MCF 10A (cell line): ENCODE measurements at regions of chr9 and their contacts with region 1.

Region 1: DNA sequence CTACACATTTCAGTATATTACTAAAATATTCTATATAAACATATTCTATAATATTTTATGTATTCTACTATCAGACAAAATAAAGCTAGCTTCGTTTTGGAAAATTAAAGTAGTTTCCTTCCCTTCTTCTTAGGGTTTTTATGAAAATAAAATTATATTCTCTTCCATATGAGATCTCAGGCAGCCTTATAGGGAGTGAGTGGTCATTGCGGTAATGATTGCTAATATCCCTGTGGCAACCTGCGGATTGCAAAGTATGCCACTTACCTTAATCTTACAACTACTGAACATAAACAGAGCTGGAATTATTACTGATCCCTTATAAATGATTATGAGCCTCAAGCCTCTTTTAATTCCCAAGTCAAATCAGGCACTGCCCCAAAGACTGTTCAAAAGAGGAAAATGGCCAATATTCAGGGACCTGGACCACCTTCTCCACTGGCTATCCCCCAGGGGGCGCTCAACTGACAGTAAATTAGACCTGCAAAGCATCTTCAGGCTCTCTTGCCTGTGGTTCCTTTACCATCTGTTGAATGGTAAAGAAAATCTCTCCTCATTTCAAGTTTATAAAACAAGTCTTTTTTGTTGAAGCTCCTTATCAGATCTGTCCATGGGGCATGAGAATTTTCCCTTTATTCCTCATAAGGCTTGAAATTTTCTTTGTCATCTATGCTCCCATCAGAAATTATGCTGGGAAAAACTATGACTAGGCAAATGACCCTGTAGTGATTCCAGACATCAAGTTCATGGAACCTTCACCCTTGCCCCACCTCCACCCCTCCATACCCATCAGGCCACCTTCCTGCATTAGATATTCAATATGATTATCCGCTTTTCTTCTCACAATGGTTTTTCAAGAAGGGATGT is 163.9 kb downstream of the CEMIP2 start:
- DNase-seq: peak; percentile 79
- H3K4me3 Mint-ChIP-seq: no peak overlapping the region
- H3K27ac Mint-ChIP-seq: no peak overlapping the region
- H3K4me1 Mint-ChIP-seq: no peaks in the 10 kb centered on the region
- H3K27me3 Mint-ChIP-seq: no peaks in the 10 kb centered on the region
- CTCF ChIP-seq: peak; percentile 69

Region 2: GRCh38 chr9:71490810-71491209 is 113.6 kb before region 1 on chr9:
- CTCF ChIA-PET with region 1: interaction called, 22 read pairs
- POLR2A ChIA-PET with region 1: no interaction called
- intact Hi-C with region 1: loop called (anchors 5 kb)
- DNase-seq: peak; percentile 33
- H3K4me3 Mint-ChIP-seq: no peak overlapping the region
- H3K27ac Mint-ChIP-seq: no peak overlapping the region
- H3K4me1 Mint-ChIP-seq: peaks cover 3% of the 10 kb centered on the region
- H3K27me3 Mint-ChIP-seq: no peaks in the 10 kb centered on the region
- CTCF ChIP-seq: peak; percentile 50

Region 3: GRCh38 chr9:71614409-71615010 is 10.1 kb after region 1 on chr9:
- CTCF ChIA-PET with region 1: interaction called, 18 read pairs
- POLR2A ChIA-PET with region 1: no interaction called
- intact Hi-C with region 1: no loop called
- DNase-seq: no peak
- H3K4me3 Mint-ChIP-seq: no peak overlapping the region
- H3K27ac Mint-ChIP-seq: no peak overlapping the region
- H3K4me1 Mint-ChIP-seq: no peaks in the 10 kb centered on the region
- H3K27me3 Mint-ChIP-seq: no peaks in the 10 kb centered on the region
- CTCF ChIP-seq: no peak

Region 4: GRCh38 chr9:71683598-71684235 is 79.3 kb after region 1 on chr9:
- CTCF ChIA-PET with region 1: interaction called, 39 read pairs
- POLR2A ChIA-PET with region 1: interaction called, 4 read pairs
- intact Hi-C with region 1: no loop called
- DNase-seq: peak; percentile 88
- H3K4me3 Mint-ChIP-seq: peak overlapping the region; percentile 15
- H3K27ac Mint-ChIP-seq: no peak overlapping the region
- H3K4me1 Mint-ChIP-seq: peaks cover 35% of the 10 kb centered on the region
- H3K27me3 Mint-ChIP-seq: no peaks in the 10 kb centered on the region
- CTCF ChIP-seq: peak; percentile 62

Region 5: GRCh38 chr9:71716138-71716909 is 111.9 kb after region 1 on chr9:
- CTCF ChIA-PET with region 1: interaction called, 9 read pairs
- POLR2A ChIA-PET with region 1: no interaction called
- intact Hi-C with region 1: loop called (anchors 2 kb)
- DNase-seq: no peak
- H3K4me3 Mint-ChIP-seq: no peak overlapping the region
- H3K27ac Mint-ChIP-seq: peak overlapping the region; percentile 54
- H3K4me1 Mint-ChIP-seq: peaks cover 19% of the 10 kb centered on the region
- H3K27me3 Mint-ChIP-seq: no peaks in the 10 kb centered on the region
- CTCF ChIP-seq: peak; percentile 42

Region 6: DNA sequence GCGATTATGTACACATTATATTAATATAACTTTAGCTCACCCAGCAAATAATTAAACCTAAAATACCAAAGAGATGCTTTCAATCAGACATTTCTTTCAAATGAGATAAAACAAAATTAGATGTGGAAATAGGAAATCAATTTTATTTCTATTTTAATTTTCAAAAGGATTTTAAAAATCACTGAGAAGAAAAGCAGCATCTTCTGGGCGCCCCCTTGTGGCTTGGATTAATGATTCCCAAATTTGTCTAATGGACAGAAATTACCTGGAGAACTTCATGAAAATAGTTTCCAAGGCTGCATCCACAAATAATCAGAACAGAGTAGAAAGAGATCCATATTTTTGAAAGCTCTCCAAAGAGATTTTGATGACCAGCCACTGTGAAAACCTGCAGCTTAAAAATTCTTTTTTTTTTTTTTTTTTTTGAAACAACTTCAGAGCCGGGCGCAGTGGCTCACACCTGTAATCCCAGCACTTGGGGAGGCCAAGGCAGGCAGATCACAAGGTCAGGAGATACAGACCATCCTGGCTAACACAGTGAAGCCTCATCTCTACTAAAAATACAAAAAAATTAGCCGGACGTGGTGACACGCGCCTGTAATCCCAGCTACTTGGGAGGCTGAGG is 214.8 kb after region 1 on chr9:
- CTCF ChIA-PET with region 1: interaction called, 27 read pairs
- POLR2A ChIA-PET with region 1: no interaction called
- intact Hi-C with region 1: loop called (anchors 1 kb)
- DNase-seq: peak; percentile 56
- H3K4me3 Mint-ChIP-seq: no peak overlapping the region
- H3K27ac Mint-ChIP-seq: no peak overlapping the region
- H3K4me1 Mint-ChIP-seq: no peaks in the 10 kb centered on the region
- H3K27me3 Mint-ChIP-seq: no peaks in the 10 kb centered on the region
- CTCF ChIP-seq: peak; percentile 62